Activated CD4-positive, alpha-beta memory T cell treated with anti-CD3 and anti-CD28 coated beads, Interleukin-2, amount 10 ng/mL, durations not matched to agents 7 days and 5 days (primary cell): ENCODE measurements at regions of chr1 and their contacts with region 1.

Region 1: GRCh38 chr1:206766251-206766856 is 4.2 kb upstream of the IL19 start:
- DNase-seq: peak; percentile 85
- H3K4me3 Mint-ChIP-seq: peak overlapping the region; percentile 21
- H3K27ac Mint-ChIP-seq: peak overlapping the region; percentile 66
- H3K4me1 Mint-ChIP-seq: peaks cover 75% of the 10 kb centered on the region
- H3K27me3 Mint-ChIP-seq: peaks cover 19% of the 10 kb centered on the region

Region 2: GRCh38 chr1:206744683-206745082 is 21.7 kb before region 1 on chr1:
- CTCF ChIA-PET with region 1: interaction called, 9 read pairs
- POLR2A ChIA-PET with region 1: interaction called, 14 read pairs
- DNase-seq: peak; percentile 55
- H3K4me3 Mint-ChIP-seq: no peak overlapping the region
- H3K27ac Mint-ChIP-seq: no peak overlapping the region
- H3K4me1 Mint-ChIP-seq: peaks cover 71% of the 10 kb centered on the region
- H3K27me3 Mint-ChIP-seq: peaks cover 12% of the 10 kb centered on the region

Region 3: DNA sequence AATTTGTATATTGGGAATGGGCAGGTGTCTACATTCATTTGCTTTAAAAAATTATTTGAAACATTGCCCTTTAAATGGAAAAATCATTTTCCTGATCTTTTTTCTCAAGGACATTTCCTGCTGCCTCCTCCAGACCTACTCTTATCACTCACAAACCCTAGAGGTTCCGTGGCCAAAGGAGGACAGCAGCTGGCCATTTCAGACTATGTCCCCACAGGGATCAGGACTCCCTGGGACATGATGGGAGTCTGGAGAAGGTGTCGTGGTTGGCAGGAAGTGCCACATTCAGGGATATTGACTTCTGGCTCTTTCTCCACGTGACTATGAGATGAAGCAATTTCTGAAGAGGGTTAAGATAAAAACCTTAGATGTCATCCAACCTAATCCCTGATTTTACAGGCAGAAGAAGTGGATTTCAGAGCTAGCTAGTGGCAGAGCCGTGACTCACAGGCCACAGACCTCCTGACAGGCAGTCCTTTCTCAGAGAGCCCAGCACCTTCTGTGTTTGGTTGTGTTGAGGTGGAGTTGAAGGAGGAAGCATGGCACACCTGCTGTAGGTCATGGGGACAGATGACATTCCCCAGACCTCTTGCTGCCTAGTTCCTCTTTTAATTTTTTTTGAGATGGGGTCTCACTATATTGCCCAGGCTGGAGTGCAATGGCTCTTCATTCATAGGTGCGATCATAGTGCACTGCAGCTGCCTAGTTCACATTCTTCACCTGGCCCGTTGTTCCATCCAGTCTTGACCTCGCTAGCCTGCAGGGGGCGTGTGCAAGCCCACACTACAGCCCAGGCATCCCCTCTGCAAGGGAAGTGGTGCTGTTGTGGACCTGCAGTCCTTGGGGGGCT is 31.4 kb after region 1 on chr1:
- CTCF ChIA-PET with region 1: interaction called, 39 read pairs
- POLR2A ChIA-PET with region 1: interaction called, 72 read pairs
- DNase-seq: peak; percentile 45
- H3K4me3 Mint-ChIP-seq: no peak overlapping the region
- H3K27ac Mint-ChIP-seq: no peak overlapping the region
- H3K4me1 Mint-ChIP-seq: peaks cover 64% of the 10 kb centered on the region
- H3K27me3 Mint-ChIP-seq: peaks cover 38% of the 10 kb centered on the region

Region 4: DNA sequence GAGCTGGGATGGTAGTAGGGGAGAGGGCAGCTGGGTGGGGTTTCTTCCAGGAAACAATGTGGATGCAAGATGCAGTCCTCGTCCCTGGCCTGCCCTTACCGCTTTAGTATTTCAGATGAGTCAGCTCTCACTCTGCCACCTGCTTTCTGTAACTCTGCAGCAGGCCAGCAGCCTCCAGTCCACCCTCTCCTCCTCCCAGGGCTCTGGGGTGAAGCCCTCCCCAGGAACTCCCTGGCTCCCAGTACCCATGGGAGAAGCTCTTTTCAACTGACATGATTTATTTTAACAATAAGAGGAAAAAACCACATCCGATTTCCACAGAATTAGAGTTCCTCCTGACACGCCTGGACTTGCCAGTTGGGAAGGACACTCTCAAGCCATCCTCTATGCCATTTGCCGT is 60.1 kb after region 1 on chr1:
- CTCF ChIA-PET with region 1: no interaction called
- POLR2A ChIA-PET with region 1: no interaction called
- DNase-seq: no peak
- H3K4me3 Mint-ChIP-seq: no peak overlapping the region
- H3K27ac Mint-ChIP-seq: no peak overlapping the region
- H3K4me1 Mint-ChIP-seq: peaks cover 37% of the 10 kb centered on the region
- H3K27me3 Mint-ChIP-seq: no peaks in the 10 kb centered on the region

Region 5: GRCh38 chr1:207218512-207219362 is 452.4 kb after region 1 on chr1:
- CTCF ChIA-PET with region 1: no interaction called
- POLR2A ChIA-PET with region 1: no interaction called
- DNase-seq: no peak
- H3K4me3 Mint-ChIP-seq: no peak overlapping the region
- H3K27ac Mint-ChIP-seq: no peak overlapping the region
- H3K4me1 Mint-ChIP-seq: no peaks in the 10 kb centered on the region
- H3K27me3 Mint-ChIP-seq: peaks cover 6% of the 10 kb centered on the region